ENCODE measurements at regions of chr6 and their contacts with region 1.

Region 1: DNA sequence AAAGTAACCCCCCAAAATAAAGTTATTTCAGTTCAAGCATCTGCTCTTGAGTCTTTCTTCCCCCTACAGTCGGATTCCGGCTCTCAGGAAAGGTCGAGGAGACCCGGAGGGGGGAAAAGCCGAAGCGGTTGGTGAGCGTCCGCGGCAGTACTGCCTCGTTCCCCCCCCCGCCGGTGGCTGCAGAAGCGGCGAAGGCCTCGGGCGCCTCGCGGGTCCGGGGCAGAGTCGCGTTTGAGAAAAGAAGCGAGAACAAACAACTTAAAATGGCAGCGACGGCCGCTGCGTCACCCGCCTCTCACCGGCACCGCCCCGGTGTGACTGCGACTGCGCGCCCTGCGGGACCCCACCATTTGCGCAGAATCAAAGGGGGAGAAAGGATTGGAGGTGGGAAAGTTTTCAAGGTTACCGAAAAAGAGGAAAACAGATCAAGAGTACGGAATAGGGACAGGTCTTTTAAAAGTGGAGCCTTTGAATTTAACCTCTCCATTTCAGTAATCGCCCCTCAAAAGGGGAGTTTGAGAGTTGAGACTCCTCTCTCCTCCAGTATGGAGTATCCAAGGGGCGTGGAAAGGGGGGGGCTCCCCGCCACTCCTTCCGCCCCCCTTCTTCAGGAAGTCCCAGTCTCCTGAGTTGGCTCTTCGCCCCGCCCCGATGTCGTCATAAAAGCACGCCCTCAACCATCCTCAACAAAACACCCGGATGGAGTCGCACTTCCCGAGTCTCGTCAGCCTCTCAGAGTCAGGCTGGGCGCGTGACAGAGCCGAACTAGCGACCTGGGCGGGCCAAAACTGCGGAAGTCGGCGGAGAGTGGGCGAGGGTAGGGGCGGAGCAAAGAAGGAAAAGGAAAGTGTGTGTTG is 1.9 kb upstream of the C6orf62 start:
- DNase-seq: peak; percentile 100
- H3K4me3 ChIP-seq: peak overlapping the region; percentile 98
- H3K27ac ChIP-seq: peak overlapping the region; percentile 90 to 100
- H3K4me1 ChIP-seq: peaks cover 3% of the 10 kb centered on the region
- H3K27me3 ChIP-seq: no peaks in the 10 kb centered on the region
- CTCF ChIP-seq: peak in 2 of 3 donors; percentile 10 to 26
- EP300 ChIP-seq: peak; percentile 48
- POLR2A ChIP-seq: peak; percentile 100

Region 2: GRCh38 chr6:24774696-24775519 is 54.1 kb after region 1 on chr6 and contains the start of gene GMNN:
- intact Hi-C with region 1: loop called in 2 of 4 experiments (anchors 5 to 10 kb)
- DNase-seq: peak; percentile 98 to 99 (median 98)
- H3K4me3 ChIP-seq: peak within 1 kb of the TSS; percentile 96
- H3K27ac ChIP-seq: peak within 1 kb of the TSS; percentile 82 to 85
- H3K4me1 ChIP-seq: peaks cover 6% of the 10 kb centered on the region
- H3K27me3 ChIP-seq: no peaks in the 10 kb centered on the region
- CTCF ChIP-seq: no peak
- EP300 ChIP-seq: no peak
- POLR2A ChIP-seq: peak; percentile 59
- total RNA-seq, gene GMNN: 4.7 to 36.1 (median 8.8) TPM

Region 3: GRCh38 chr6:24788048-24788665 is 67.3 kb after region 1 on chr6:
- intact Hi-C with region 1: no loop called
- DNase-seq: no peak
- H3K4me3 ChIP-seq: no peak overlapping the region
- H3K27ac ChIP-seq: no peak overlapping the region
- H3K4me1 ChIP-seq: no peaks in the 10 kb centered on the region
- H3K27me3 ChIP-seq: no peaks in the 10 kb centered on the region
- CTCF ChIP-seq: no peak
- EP300 ChIP-seq: no peak
- POLR2A ChIP-seq: no peak

Region 4: GRCh38 chr6:25193460-25194171 is 472.8 kb after region 1 on chr6:
- intact Hi-C with region 1: loop called in 1 of 4 experiments (anchors 10 kb)
- DNase-seq: peak in 3 of 5 donors; percentile 74 to 81 (median 78)
- H3K4me3 ChIP-seq: no peak overlapping the region
- H3K27ac ChIP-seq: peak overlapping the region in 1 of 2 donors; percentile 74
- H3K4me1 ChIP-seq: peaks cover 10% of the 10 kb centered on the region
- H3K27me3 ChIP-seq: no peaks in the 10 kb centered on the region
- CTCF ChIP-seq: no peak
- EP300 ChIP-seq: no peak
- POLR2A ChIP-seq: no peak

Measured in ovary (tissue), 10 donors.